Panc1 (cell line): ENCODE measurements at regions of chr1 and their contacts with region 1.

Region 1: GRCh38 chr1:20194757-20195461 is 8.6 kb upstream of the PLA2G2C start:
- DNase-seq: peak; percentile 35
- ATAC-seq: peak; percentile 79
- H3K4me3 ChIP-seq: no peak overlapping the region
- H3K27ac ChIP-seq: no peak overlapping the region
- H3K4me1 ChIP-seq: no peaks in the 10 kb centered on the region
- H3K27me3 ChIP-seq: peaks cover 20% of the 10 kb centered on the region
- CTCF ChIP-seq: peak; percentile 92

Region 2: GRCh38 chr1:20100632-20101355 is 94.1 kb before region 1 on chr1:
- CTCF ChIA-PET with region 1: interaction called, 3 read pairs
- POLR2A ChIA-PET with region 1: no interaction called
- in situ Hi-C with region 1: no loop called
- intact Hi-C with region 1: loop called (anchors 2 kb)
- DNase-seq: peak; percentile 56
- ATAC-seq: peak; percentile 91
- H3K4me3 ChIP-seq: no peak overlapping the region
- H3K27ac ChIP-seq: no peak overlapping the region
- H3K4me1 ChIP-seq: no peaks in the 10 kb centered on the region
- H3K27me3 ChIP-seq: no peaks in the 10 kb centered on the region
- CTCF ChIP-seq: peak; percentile 87

Region 3: GRCh38 chr1:20124456-20125057 is 70.4 kb before region 1 on chr1:
- CTCF ChIA-PET with region 1: no interaction called
- POLR2A ChIA-PET with region 1: no interaction called
- in situ Hi-C with region 1: no loop called
- intact Hi-C with region 1: no loop called
- DNase-seq: peak; percentile 20
- ATAC-seq: peak; percentile 74
- H3K4me3 ChIP-seq: no peak overlapping the region
- H3K27ac ChIP-seq: no peak overlapping the region
- H3K4me1 ChIP-seq: no peaks in the 10 kb centered on the region; the same call in 1 of the 2 replicates
- H3K27me3 ChIP-seq: peaks cover 12% of the 10 kb centered on the region
- CTCF ChIP-seq: no peak